ENCODE measurements at regions of chr17 and their contacts with region 1.

Region 1: GRCh38 chr17:40362696-40363110 is 1.8 kb downstream of the GJD3 start:
- DNase-seq: peak; percentile 94
- H3K4me3 ChIP-seq: peak overlapping the region; percentile 30 to 78 (median 56)
- H3K27ac ChIP-seq: peak overlapping the region in 5 of 8 donors; percentile 78 to 84 (median 81)
- H3K4me1 ChIP-seq: peaks cover 7 to 54% (median 31%) of the 10 kb centered on the region in 6 donors
- H3K27me3 ChIP-seq: peaks cover 0 to 42% (median 6%) of the 10 kb centered on the region in 7 donors
- CTCF ChIP-seq: peak; percentile 8 to 83 (median 62)
- POLR2A ChIP-seq: no peak

Region 2: GRCh38 chr17:40417609-40418427 is 55.1 kb after region 1 on chr17 and contains the start of gene TOP2A:
- intact Hi-C with region 1: loop called (anchors 5 kb)
- DNase-seq: peak; percentile 91
- H3K4me3 ChIP-seq: peak within 1 kb of the TSS; percentile 57 to 92 (median 66)
- H3K27ac ChIP-seq: peak within 1 kb of the TSS; percentile 27 to 81 (median 69)
- H3K4me1 ChIP-seq: peaks cover 18 to 52% (median 36%) of the 10 kb centered on the region in 6 donors
- H3K27me3 ChIP-seq: peaks cover 0 to 9% (median 0%) of the 10 kb centered on the region in 7 donors
- CTCF ChIP-seq: peak in 2 of 11 experiments; percentile 22 to 26
- POLR2A ChIP-seq: no peak
- total RNA-seq, gene TOP2A: 5.5 to 37.5 (median 14.4) TPM

Region 3: GRCh38 chr17:41013606-41014005 is 650.9 kb after region 1 on chr17:
- intact Hi-C with region 1: no loop called
- DNase-seq: no peak
- H3K4me3 ChIP-seq: no peak overlapping the region
- H3K27ac ChIP-seq: no peak overlapping the region
- H3K4me1 ChIP-seq: no peaks in the 10 kb centered on the region
- H3K27me3 ChIP-seq: no peaks in the 10 kb centered on the region
- CTCF ChIP-seq: no peak
- POLR2A ChIP-seq: no peak